Posterior cingulate gyrus (tissue), 11 donors: ENCODE measurements at regions of chr7 and their contacts with region 1.

Region 1: DNA sequence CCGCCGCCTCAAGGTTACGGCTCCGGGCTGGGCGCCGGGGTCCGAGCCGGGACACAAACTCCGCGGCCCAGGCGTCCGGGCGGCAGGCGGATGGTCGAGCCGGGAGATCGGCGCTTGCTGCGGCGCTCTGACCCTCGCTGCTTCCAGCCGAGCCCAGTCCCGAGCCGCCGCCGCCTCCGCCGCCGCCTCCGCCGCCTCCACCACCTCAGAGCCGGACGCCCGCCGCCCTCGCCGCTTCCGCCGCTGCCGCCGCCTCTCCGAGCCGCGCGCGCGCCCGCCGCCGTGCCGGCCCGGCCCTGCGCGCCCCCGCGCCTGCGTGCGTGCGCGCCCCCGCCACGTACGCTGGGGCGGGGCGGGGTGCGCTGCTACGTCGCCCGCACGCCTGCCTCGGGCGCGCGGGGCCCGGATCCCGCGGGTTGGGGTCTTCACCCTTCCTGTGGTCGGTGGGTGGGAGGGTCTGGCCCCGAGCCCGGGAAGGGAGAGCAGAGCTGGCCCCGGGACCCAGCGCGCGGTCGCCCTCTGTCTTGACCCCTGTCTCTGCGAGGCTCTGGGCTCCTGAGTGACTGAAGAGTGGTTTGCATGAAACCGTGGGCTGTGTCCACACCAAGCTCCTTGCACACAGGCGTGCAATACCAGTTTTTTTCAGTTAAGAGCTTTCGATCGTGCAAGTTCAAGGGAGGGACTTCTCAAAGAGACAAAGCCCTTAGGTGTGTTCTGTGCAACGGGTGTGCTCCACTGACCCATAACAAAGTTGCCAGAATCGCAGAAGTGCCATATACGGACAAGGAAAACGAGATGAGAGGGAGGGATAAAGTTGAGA is at the start of gene SMURF1:
- DNase-seq: peak; percentile 27 to 94 (median 58)

Region 2: DNA sequence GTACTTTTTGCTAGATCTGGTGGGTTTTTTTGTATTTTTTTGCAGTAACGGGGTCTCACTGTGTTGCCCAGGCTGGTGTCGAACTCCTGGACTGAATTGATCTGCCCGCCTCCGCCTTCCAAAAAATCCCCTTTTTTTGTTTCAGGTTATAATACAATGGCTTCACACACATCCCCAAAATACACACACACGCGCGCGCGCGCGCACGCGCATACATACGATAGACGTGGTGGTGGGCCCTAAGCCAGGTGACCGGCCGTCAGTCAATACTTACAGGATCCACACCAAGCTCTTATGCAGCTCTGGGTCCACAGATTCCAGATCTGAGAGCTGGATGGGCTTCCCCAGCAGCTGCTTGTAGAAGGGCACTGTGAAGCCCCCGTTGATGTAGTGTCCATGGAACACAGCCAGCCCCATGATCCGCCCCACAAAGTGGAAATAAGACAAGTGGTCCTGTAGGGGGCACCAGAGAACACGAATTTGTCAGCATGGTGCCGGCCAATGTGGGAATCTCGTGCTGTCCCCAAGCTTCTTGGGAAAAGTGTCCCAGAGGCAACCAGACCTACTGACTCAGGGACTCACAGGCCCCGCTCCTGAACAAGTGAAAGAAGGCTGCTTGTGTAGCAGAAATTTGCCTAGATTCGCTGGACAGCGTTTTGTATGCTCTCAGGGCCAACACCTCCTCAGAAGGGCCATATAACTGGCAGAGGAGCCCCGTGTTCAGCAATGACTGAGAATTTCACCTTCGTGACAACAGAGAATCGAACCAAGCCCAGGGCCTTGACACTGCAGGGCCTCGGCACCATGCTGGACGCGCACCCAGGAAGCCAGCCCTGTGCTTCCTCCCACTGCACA is 103.7 kb before region 1 on chr7:
- intact Hi-C with region 1: loop called (anchors 2 kb)
- DNase-seq: peak; percentile 70 to 97 (median 85)

Region 3: GRCh38 chr7:99079104-99079503 is 65.0 kb before region 1 on chr7:
- intact Hi-C with region 1: loop called (anchors 5 kb)
- DNase-seq: peak in 1 of 10 donors; percentile 39

Region 4: DNA sequence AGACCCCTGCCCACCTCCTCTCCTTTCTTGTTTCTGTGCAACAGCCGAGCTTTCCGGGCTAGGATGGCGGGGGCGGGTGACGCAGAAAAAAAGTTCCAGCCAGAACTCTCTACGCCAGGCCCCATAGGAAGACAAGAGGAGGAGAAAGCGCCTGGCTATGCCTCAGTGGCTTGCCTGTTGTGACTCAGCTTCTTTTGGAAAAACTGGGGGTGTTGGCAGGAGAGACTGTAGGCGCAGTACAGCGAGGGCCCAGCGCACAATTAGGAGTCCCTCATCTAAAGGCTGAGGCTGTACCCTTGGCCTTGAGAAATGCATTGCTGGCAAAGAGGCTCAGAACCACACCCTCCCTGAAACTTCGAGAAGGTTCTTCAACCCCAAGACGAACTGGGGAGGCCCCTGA is 91.9 kb after region 1 on chr7:
- intact Hi-C with region 1: no loop called
- DNase-seq: peak in 3 of 10 donors; percentile 11 to 72 (median 14)

Region 5: DNA sequence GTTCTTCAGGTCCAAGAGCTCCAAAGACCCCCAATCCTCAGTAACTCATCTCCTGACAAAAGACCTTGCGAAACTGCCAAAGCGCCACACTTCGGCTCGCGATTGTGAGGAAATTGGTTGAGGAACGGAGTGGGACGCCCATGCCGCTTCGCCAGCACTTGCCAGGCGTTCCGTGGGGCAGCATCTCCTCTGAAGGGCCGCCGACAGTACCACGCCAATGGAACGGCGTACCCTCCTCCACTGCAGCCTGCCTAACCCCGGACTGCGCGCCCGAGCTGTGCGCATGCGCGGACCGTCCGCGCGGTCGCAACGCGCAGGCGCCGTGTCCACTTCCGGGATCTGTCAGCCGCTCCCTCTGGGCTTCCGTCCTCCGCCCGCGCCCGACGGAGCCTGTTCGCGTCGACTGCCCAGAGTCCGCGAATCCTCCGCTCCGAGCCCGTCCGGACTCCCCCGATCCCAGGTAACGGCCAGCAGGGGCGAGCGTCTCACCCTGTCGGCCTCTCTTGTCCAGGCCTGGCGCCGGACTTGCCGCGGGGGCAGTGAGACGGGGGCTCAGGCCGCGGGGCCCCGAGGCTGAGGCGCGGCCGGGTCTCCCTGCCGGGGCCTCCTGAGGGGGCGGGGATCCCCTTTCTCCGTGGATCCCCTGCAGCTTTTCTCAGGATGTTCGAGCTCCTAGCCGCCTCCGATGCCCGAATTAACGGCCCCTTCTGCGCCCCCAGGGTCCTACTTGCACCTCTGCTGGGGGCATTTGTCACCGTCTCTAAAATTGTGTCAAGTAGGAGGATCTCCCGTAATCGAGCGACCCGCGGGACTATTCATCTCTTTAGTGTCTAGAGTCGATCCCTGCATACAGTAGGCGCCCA is 181.7 kb after region 1 on chr7 and contains the start of gene ARPC1A:
- intact Hi-C with region 1: loop called (anchors 5 kb)
- DNase-seq: peak; percentile 75 to 97 (median 81)

Region 6: DNA sequence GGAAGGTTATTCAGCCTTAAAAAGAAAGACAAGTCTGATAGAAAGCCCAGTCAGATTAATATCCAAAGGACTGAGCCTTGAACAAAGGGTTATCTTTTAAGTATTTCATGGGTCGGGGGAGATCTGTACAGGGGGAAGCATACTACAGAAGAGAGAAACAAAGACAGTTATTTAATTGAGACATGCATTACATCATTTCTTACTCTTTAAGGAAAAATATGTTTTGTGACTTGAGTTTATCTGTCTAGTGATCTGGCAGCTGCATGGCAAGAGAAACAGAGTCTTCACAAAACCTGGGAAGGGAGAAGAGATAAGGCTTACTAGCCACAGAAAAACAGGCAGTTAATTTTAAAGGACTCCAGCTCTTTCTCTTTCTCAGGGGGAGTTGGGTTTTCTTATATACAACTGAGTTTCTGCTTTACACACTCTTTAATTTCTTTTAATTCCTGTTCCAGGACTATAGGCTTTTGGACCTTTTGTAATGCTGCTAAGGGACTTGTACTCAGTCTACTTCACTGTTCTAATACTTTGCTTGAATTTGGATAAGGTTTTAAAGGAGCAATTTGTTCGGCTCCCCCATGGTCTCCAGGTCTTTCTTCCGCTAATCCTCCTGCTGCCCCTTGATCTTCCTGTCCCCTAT is 662.9 kb after region 1 on chr7:
- intact Hi-C with region 1: no loop called
- DNase-seq: no peak